Naive thymus-derived CD4-positive, alpha-beta T cell (primary cell): ENCODE measurements at regions of chr1 and their contacts with region 1.

Region 1: GRCh38 chr1:174159252-174160108 is at the start of gene RABGAP1L:
- DNase-seq: peak; percentile 87 to 95 (median 93)
- ATAC-seq: peak; percentile 96
- H3K4me3 ChIP-seq: peak within 1 kb of the TSS; percentile 72
- H3K4me3 Mint-ChIP-seq: peak within 1 kb of the TSS; percentile 92 to 100 (median 96)
- H3K27ac ChIP-seq: peak within 1 kb of the TSS; percentile 87
- H3K27ac Mint-ChIP-seq: peak within 1 kb of the TSS; percentile 86 to 98 (median 98)
- H3K4me1 ChIP-seq: peaks cover 9 to 20% of the 10 kb centered on the region in 2 donors
- H3K4me1 Mint-ChIP-seq: peaks cover 31 to 59% (median 53%) of the 10 kb centered on the region in 7 donors
- H3K27me3 ChIP-seq: no peaks in the 10 kb centered on the region
- H3K27me3 Mint-ChIP-seq: no peaks in the 10 kb centered on the region
- total RNA-seq, gene RABGAP1L: 51.9 to 97.4 (median 74.3) TPM

Region 2: GRCh38 chr1:172837816-172838680 is 1321.4 kb before region 1 on chr1:
- CTCF ChIA-PET with region 1: no interaction called
- POLR2A ChIA-PET with region 1: no interaction called
- intact Hi-C with region 1: loop called in 1 of 2 experiments (anchors 10 kb)
- DNase-seq: peak in 7 of 9 donors; percentile 47 to 78 (median 72)
- ATAC-seq: peak; percentile 99
- H3K4me3 ChIP-seq: no peak overlapping the region
- H3K4me3 Mint-ChIP-seq: peak overlapping the region in 9 of 10 donors; percentile 20 to 59 (median 41)
- H3K27ac ChIP-seq: no peak overlapping the region
- H3K27ac Mint-ChIP-seq: peak overlapping the region in 7 of 9 donors; percentile 63 to 92 (median 78)
- H3K4me1 ChIP-seq: peaks cover 12 to 16% of the 10 kb centered on the region in 2 donors
- H3K4me1 Mint-ChIP-seq: peaks cover 3 to 36% (median 28%) of the 10 kb centered on the region in 7 donors
- H3K27me3 ChIP-seq: no peaks in the 10 kb centered on the region
- H3K27me3 Mint-ChIP-seq: peaks cover 0 to 59% (median 0%) of the 10 kb centered on the region in 5 donors

Region 3: DNA sequence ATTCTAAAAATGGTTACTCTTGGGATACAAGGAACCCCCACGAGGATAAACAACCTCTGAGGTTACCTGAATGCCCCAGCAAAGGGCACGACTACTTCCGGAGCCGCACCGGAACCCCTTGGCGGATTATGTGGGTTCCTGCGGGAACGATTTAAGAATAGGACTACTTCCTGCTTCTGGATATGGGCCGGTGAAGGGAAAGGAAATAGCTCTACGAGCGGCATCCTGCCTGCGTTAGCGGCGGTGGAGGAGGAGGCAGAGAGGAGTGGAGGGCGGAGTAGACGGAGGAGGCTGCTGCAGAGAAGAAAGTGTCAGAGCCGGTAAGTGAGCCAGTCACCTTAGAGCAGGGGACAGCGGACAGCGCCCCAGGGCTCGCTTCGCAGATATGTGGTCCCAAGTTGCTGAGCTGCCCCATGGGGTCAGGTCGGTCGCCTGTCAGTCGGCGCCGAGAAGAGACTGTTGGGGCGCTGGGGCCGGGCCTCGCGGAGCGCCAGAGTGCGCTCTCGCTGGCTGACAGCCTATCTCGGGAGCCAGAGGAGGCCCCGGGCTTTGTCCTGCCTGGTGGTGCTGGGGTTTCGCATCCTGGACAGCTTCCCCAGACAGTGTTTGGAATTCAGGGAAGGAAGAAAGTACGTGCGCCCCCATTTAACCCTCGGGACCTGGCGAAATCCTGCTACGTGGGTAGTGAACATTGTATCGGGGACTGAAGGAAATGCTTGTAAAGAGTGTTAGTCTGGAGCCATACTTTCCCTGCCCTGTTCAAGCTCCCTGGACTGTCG is 444.5 kb before region 1 on chr1 and contains the start of gene KLHL20:
- CTCF ChIA-PET with region 1: no interaction called
- POLR2A ChIA-PET with region 1: interaction called, 4 read pairs
- intact Hi-C with region 1: loop called (anchors 1 to 2 kb)
- DNase-seq: peak; percentile 60 to 92 (median 89)
- ATAC-seq: peak; percentile 98
- H3K4me3 ChIP-seq: peak within 1 kb of the TSS; percentile 77
- H3K4me3 Mint-ChIP-seq: peak within 1 kb of the TSS; percentile 90 to 100 (median 96)
- H3K27ac ChIP-seq: peak within 1 kb of the TSS; percentile 78
- H3K27ac Mint-ChIP-seq: peak within 1 kb of the TSS; percentile 89 to 99 (median 94)
- H3K4me1 ChIP-seq: peaks cover 11 to 18% of the 10 kb centered on the region in 2 donors
- H3K4me1 Mint-ChIP-seq: peaks cover 14 to 48% (median 35%) of the 10 kb centered on the region in 7 donors
- H3K27me3 ChIP-seq: no peaks in the 10 kb centered on the region
- H3K27me3 Mint-ChIP-seq: peaks cover 14 to 32% (median 19%) of the 10 kb centered on the region in 5 donors
- total RNA-seq, gene KLHL20: 28.3 to 40.9 (median 32.8) TPM

Region 4: DNA sequence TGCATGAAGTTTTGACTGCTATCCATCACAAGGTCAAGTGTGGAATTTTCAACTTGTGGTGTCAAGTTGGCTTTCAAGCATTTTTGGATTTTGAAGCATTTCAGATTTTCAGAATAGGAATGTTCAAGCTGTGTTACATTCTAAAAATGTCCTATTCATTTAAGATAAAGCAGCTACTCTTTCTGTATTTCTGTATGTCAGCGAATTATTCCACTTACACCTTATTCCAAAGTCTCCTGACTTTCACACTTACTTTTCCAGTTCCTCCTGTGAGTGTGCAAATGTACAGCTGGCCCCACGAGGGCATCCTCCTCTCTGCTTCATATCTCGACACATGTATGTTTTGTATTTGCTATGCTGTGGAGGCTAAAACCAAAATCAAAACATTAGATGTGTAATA is 189.2 kb before region 1 on chr1:
- CTCF ChIA-PET with region 1: no interaction called
- POLR2A ChIA-PET with region 1: no interaction called
- intact Hi-C with region 1: loop called in 1 of 2 experiments (anchors 5 kb)
- DNase-seq: no peak
- ATAC-seq: no peak
- H3K4me3 ChIP-seq: no peak overlapping the region
- H3K4me3 Mint-ChIP-seq: no peak overlapping the region
- H3K27ac ChIP-seq: no peak overlapping the region
- H3K27ac Mint-ChIP-seq: peak overlapping the region in 4 of 9 donors; percentile 45 to 65 (median 52)
- H3K4me1 ChIP-seq: no peaks in the 10 kb centered on the region
- H3K4me1 Mint-ChIP-seq: peaks cover 0 to 8% (median 4%) of the 10 kb centered on the region in 7 donors
- H3K27me3 ChIP-seq: no peaks in the 10 kb centered on the region
- H3K27me3 Mint-ChIP-seq: no peaks in the 10 kb centered on the region

Region 5: GRCh38 chr1:174114788-174115448 is 44.6 kb before region 1 on chr1:
- CTCF ChIA-PET with region 1: no interaction called
- POLR2A ChIA-PET with region 1: no interaction called
- intact Hi-C with region 1: loop called in 1 of 2 experiments (anchors 2 kb)
- DNase-seq: peak in 5 of 9 donors; percentile 13 to 30 (median 26)
- ATAC-seq: peak; percentile 86
- H3K4me3 ChIP-seq: no peak overlapping the region
- H3K4me3 Mint-ChIP-seq: no peak overlapping the region
- H3K27ac ChIP-seq: no peak overlapping the region
- H3K27ac Mint-ChIP-seq: no peak overlapping the region
- H3K4me1 ChIP-seq: no peaks in the 10 kb centered on the region
- H3K4me1 Mint-ChIP-seq: peaks cover 0 to 2% (median 0%) of the 10 kb centered on the region in 7 donors
- H3K27me3 ChIP-seq: no peaks in the 10 kb centered on the region
- H3K27me3 Mint-ChIP-seq: peaks cover 0 to 13% (median 0%) of the 10 kb centered on the region in 5 donors

Region 6: GRCh38 chr1:174217787-174218574 is 58.5 kb after region 1 on chr1:
- CTCF ChIA-PET with region 1: interaction called, 4 read pairs
- POLR2A ChIA-PET with region 1: no interaction called
- intact Hi-C with region 1: loop called in 1 of 2 experiments (anchors 1 kb)
- DNase-seq: peak in 6 of 9 donors; percentile 2 to 46 (median 34)
- ATAC-seq: peak; percentile 69
- H3K4me3 ChIP-seq: no peak overlapping the region
- H3K4me3 Mint-ChIP-seq: no peak overlapping the region
- H3K27ac ChIP-seq: no peak overlapping the region
- H3K27ac Mint-ChIP-seq: no peak overlapping the region
- H3K4me1 ChIP-seq: no peaks in the 10 kb centered on the region
- H3K4me1 Mint-ChIP-seq: peaks cover 0 to 8% (median 0%) of the 10 kb centered on the region in 7 donors
- H3K27me3 ChIP-seq: no peaks in the 10 kb centered on the region
- H3K27me3 Mint-ChIP-seq: no peaks in the 10 kb centered on the region